A549 (cell line): ENCODE measurements at regions of chr17 and their contacts with region 1.

Region 1: GRCh38 chr17:82030470-82031302 is 792 bp upstream of the RAC3 start:
- DNase-seq: peak; percentile 92 to 93
- ATAC-seq: peak; percentile 62 to 88
- H3K4me3 ChIP-seq: peak overlapping the region; percentile 66
- H3K27ac ChIP-seq: peak overlapping the region; percentile 75 to 94
- H3K4me1 ChIP-seq: peaks cover 5% of the 10 kb centered on the region; the same call in 1 of the 3 replicates
- CTCF ChIP-seq: peak; percentile 54
- EP300 ChIP-seq: no peak
- POLR2A ChIP-seq: peak; percentile 31; the same call in 1 of the 2 replicates
- RAD21 ChIP-seq: peak; percentile 80 to 91

Region 2: DNA sequence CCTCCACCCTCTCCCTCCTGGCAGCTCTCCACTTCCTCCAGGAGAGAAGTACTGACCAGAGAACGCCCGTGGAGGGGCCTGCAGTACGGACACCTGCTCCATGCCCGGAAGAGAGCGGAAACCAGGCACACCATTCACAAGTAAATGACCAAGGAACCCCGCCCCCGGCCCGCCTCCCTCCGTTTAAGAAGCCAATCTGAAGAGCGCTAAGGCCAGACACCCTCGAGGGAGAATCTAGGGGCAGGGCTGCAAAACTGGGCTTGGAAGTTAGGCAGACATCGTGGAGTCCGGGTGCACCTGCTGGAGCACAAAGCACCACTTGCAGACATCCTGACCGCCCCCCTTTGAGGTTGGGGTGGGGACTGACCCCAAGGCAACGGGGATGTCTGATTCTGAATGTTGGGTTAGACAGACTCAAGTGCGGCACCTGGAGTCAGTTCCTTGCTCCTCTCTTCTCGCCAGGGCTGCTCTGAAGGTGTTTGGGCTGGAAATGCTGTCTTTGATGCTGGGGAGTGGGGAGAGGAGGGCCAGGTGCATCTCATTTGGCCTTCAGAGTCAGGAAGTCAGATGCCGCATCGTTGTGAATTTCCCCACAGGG is 477.6 kb before region 1 on chr17:
- CTCF ChIA-PET with region 1: no interaction called
- POLR2A ChIA-PET with region 1: no interaction called
- DNase-seq: peak; percentile 92 to 97
- ATAC-seq: peak; percentile 75 to 84
- H3K4me3 ChIP-seq: peak overlapping the region; percentile 86
- H3K27ac ChIP-seq: peak overlapping the region; percentile 84 to 97
- H3K4me1 ChIP-seq: peaks cover 50% of the 10 kb centered on the region
- CTCF ChIP-seq: no peak
- EP300 ChIP-seq: no peak
- POLR2A ChIP-seq: peak; percentile 75
- RAD21 ChIP-seq: peak in 1 of 2 experiments; percentile 23; a peak in 3 of 5 replicates

Region 3: GRCh38 chr17:81977211-81978027 is 53.3 kb before region 1 on chr17 and contains the start of gene ASPSCR1:
- CTCF ChIA-PET with region 1: interaction called, 11 read pairs
- POLR2A ChIA-PET with region 1: no interaction called
- DNase-seq: peak; percentile 74 to 95
- ATAC-seq: peak; percentile 88 to 89
- H3K4me3 ChIP-seq: peak within 1 kb of the TSS; percentile 89
- H3K27ac ChIP-seq: peak within 1 kb of the TSS; percentile 89 to 94
- H3K4me1 ChIP-seq: peaks cover 12% of the 10 kb centered on the region
- CTCF ChIP-seq: no peak
- EP300 ChIP-seq: no peak
- POLR2A ChIP-seq: peak; percentile 77
- RAD21 ChIP-seq: no peak
- polyA plus RNA-seq, gene ASPSCR1: 10.3 and 12.3 TPM in 2 replicates

Region 4: GRCh38 chr17:82065638-82066303 is 35.1 kb after region 1 on chr17 and contains the start of gene DUS1L:
- CTCF ChIA-PET with region 1: interaction called, 191 read pairs
- POLR2A ChIA-PET with region 1: no interaction called
- DNase-seq: peak; percentile 68 to 72
- ATAC-seq: peak; percentile 52 to 65; a peak in 5 of 6 replicates
- H3K4me3 ChIP-seq: peak within 1 kb of the TSS; percentile 94
- H3K27ac ChIP-seq: peak within 1 kb of the TSS; percentile 94 to 96
- H3K4me1 ChIP-seq: peaks cover 19% of the 10 kb centered on the region
- CTCF ChIP-seq: no peak
- EP300 ChIP-seq: no peak
- POLR2A ChIP-seq: peak; percentile 59
- RAD21 ChIP-seq: no peak
- polyA plus RNA-seq, gene DUS1L: 48.1 and 59.5 TPM in 2 replicates

Region 5: GRCh38 chr17:82098072-82098821 is 67.6 kb after region 1 on chr17 and contains the start of gene FASN:
- CTCF ChIA-PET with region 1: interaction called, 22 read pairs
- POLR2A ChIA-PET with region 1: interaction called, 33 read pairs
- DNase-seq: peak; percentile 97 to 100
- ATAC-seq: peak; percentile 70 to 72
- H3K4me3 ChIP-seq: peak within 1 kb of the TSS; percentile 91
- H3K27ac ChIP-seq: peak within 1 kb of the TSS; percentile 95 to 96
- H3K4me1 ChIP-seq: peaks cover 52% of the 10 kb centered on the region
- CTCF ChIP-seq: peak; percentile 64
- EP300 ChIP-seq: no peak
- POLR2A ChIP-seq: peak; percentile 99
- RAD21 ChIP-seq: no peak; a peak in 3 of 5 replicates
- polyA plus RNA-seq, gene FASN: 12.9 and 16.3 TPM in 2 replicates

Region 6: GRCh38 chr17:82153745-82154375 is 123.2 kb after region 1 on chr17:
- CTCF ChIA-PET with region 1: interaction called, 93 read pairs
- POLR2A ChIA-PET with region 1: interaction called, 4 read pairs
- DNase-seq: peak; percentile 78 to 90
- ATAC-seq: peak; percentile 87 to 94
- H3K4me3 ChIP-seq: no peak overlapping the region
- H3K27ac ChIP-seq: no peak overlapping the region; a peak in 1 of 6 replicates
- H3K4me1 ChIP-seq: no peaks in the 10 kb centered on the region
- CTCF ChIP-seq: peak; percentile 84
- EP300 ChIP-seq: no peak
- POLR2A ChIP-seq: no peak
- RAD21 ChIP-seq: peak; percentile 90 to 91

Region 7: GRCh38 chr17:82236142-82236981 is 205.7 kb after region 1 on chr17:
- CTCF ChIA-PET with region 1: interaction called, 17 read pairs
- POLR2A ChIA-PET with region 1: interaction called, 3 read pairs
- DNase-seq: peak; percentile 79 to 80
- ATAC-seq: peak; percentile 2 to 17; a peak in 3 of 6 replicates
- H3K4me3 ChIP-seq: no peak overlapping the region
- H3K27ac ChIP-seq: peak overlapping the region; percentile 68 to 71
- H3K4me1 ChIP-seq: peaks cover 83% of the 10 kb centered on the region
- CTCF ChIP-seq: peak; percentile 97
- EP300 ChIP-seq: no peak
- POLR2A ChIP-seq: no peak
- RAD21 ChIP-seq: peak; percentile 92 to 95